GM18951 (cell line): ENCODE measurements at regions of chr7 and their contacts with region 1.

Region 1: DNA sequence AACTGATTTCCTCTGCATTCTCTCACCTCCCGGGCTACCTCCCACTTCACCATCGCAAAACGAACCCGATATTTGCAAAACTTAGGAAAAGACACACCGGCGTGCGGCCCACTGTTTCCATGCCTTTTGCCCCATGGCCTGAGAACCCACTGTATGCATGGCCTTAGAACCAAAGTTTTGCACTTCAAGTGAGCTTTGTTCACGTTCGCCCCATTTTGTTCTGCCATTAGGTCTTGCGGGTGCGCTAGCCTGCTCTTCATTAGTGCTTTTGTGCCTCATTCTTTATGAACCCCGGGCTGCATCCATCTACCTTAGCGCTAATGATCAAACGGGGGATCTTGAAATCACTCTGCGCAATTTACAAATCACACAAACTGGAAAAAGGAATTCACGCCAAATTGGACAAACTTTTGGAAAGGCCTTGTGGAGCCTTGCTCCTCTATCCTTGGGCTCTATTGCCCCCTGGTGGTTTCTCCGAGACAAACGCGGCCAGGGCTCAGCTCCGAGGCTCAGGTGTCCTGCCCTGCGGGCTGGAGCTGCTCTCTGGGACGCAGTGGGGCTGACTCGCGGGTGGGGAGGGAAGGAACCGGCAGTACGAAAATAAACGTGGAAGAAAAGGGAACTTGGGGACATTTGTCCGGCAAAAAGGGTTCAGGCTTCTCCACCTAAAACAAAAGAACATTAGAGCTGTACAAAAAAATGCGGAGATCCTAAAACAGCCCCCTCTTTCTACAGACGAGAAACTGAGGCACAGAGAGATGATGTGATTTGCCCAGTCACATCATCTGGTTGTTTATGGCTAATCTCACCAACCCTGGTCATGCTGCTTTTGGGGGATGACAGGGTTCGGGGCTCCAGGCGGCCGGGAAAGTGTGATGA is 300.4 kb upstream of the NFE2L3 start:
- POLR2A ChIP-seq: no peak

Region 2: DNA sequence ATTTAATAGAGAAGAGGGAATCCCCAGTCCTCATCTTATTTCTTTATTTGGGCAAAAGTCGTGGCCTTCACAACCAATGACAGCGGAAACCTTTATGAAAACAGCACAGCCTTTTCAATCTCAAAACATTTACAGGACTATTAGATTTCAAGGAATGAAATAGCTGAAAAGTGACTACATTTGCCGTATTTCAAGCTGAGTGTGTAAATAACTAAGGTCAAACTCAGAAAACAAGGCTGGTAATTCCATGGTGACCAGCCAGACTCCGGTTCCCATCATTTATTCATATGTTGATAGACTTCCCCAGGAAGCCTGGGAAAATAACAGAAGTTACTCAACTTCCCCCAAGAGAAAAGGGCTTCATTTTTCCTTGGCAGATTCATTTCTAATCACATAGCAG is 156.9 kb before region 1 on chr7:
- in situ Hi-C with region 1: no loop called
- POLR2A ChIP-seq: no peak

Region 3: DNA sequence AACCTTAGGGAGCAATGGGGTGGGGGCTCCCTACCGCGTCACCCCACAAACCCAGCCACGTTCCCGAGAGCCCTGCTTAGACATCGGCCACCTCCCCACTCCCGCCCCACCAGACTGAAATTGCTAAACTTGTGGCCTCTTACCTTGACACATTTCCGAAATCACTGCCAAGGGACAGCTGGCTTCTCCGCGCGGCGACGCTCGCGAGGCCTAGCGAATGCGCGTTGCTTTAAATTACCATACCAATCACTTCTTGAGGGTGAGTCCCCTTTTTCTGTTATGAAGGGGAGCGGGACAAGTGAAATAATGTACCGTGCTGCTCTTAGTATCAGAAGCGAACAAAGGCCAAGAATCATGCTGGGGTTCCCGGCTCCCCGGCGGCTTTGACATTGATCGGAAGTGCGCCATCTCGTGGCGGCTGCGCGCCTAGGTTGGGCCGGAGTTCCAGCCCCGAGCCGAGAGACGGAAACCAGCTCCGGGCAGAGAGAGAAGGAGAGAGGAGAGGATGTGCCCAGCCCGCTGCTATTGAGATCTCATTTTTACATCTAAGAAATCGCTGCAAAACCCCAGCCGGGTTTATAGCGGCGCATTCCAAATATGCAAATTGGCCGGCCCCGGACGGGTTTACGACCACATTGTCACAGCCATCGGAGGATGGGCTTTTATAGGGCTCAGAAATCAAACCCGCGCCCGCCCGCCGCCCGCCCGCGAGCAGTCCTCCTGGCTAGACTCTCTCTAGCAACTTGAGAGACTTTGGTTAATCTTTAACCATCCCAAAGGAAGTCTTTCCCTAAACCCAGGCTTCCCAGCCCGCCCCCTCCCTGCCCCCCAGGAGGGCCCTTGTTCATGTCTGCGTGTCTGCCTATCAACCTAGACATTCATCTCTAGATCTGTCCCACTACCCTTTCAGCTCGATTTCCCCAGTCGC is 1328.2 kb after region 1 on chr7:
- in situ Hi-C with region 1: loop called (anchors 10 kb)
- POLR2A ChIP-seq: no peak